Esophagus muscularis mucosa (tissue), 4 donors: ENCODE measurements at regions of chr3 and their contacts with region 1.

Region 1: GRCh38 chr3:19866751-19867347 is 67.2 kb downstream of the EFHB start:
- DNase-seq: no peak
- H3K4me3 ChIP-seq: no peak overlapping the region
- H3K27ac ChIP-seq: no peak overlapping the region
- H3K4me1 ChIP-seq: no peaks in the 10 kb centered on the region
- H3K27me3 ChIP-seq: no peaks in the 10 kb centered on the region
- CTCF ChIP-seq: peak; percentile 71 to 80 (median 74)
- EP300 ChIP-seq: no peak
- POLR2A ChIP-seq: no peak

Region 2: DNA sequence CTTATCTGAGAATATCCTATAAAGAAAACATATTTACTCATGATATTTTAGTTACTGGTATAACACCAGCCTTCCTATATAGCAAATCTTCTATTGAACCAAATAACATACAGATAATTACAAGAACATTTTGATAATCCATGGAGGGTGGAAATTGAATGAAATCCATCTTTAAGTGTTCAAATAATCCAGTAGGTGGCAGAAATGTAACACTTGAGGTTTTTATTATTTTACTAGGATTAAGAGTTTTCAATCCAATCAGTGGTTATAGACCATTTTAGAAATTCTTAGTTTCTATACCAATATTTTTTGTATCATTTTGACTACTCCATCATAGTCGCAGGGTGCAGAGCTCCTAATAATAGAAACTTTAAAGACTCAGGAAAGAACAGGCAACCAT is 820.4 kb before region 1 on chr3:
- intact Hi-C with region 1: loop called (anchors 5 kb)
- DNase-seq: no peak
- H3K4me3 ChIP-seq: no peak overlapping the region
- H3K27ac ChIP-seq: no peak overlapping the region
- H3K4me1 ChIP-seq: no peaks in the 10 kb centered on the region
- H3K27me3 ChIP-seq: no peaks in the 10 kb centered on the region
- CTCF ChIP-seq: peak in 1 of 3 experiments; percentile 12
- EP300 ChIP-seq: no peak
- POLR2A ChIP-seq: no peak

Region 3: DNA sequence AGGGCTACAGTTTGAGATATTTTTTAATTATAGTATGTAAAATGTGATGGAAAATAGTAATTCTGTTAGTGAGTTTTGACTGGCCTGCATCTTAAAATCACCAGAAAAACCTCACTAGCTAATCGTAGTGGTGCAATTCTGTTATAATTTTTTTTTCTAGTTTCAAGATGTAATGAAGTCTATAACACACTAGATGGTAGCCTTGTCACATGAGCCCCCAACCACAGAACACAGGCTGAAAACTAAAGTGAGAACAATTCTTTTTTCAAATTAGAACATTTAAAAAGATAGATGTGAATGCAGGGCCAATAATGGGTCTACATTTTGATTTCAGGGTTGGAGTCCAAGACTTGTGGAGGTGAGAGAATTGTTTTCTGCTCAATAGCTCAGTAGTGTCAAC is 801.8 kb before region 1 on chr3:
- intact Hi-C with region 1: loop called (anchors 5 kb)
- DNase-seq: no peak
- H3K4me3 ChIP-seq: no peak overlapping the region
- H3K27ac ChIP-seq: no peak overlapping the region
- H3K4me1 ChIP-seq: no peaks in the 10 kb centered on the region
- H3K27me3 ChIP-seq: no peaks in the 10 kb centered on the region
- CTCF ChIP-seq: peak in 2 of 3 experiments; percentile 23 to 29
- EP300 ChIP-seq: no peak
- POLR2A ChIP-seq: no peak

Region 4: GRCh38 chr3:19348929-19349564 is 517.8 kb before region 1 on chr3:
- intact Hi-C with region 1: loop called (anchors 5 kb)
- DNase-seq: no peak
- H3K4me3 ChIP-seq: no peak overlapping the region
- H3K27ac ChIP-seq: no peak overlapping the region
- H3K4me1 ChIP-seq: peaks cover 0 to 7% (median 0%) of the 10 kb centered on the region in 4 donors
- H3K27me3 ChIP-seq: no peaks in the 10 kb centered on the region
- CTCF ChIP-seq: peak; percentile 46 to 68 (median 47)
- EP300 ChIP-seq: no peak
- POLR2A ChIP-seq: no peak

Region 5: DNA sequence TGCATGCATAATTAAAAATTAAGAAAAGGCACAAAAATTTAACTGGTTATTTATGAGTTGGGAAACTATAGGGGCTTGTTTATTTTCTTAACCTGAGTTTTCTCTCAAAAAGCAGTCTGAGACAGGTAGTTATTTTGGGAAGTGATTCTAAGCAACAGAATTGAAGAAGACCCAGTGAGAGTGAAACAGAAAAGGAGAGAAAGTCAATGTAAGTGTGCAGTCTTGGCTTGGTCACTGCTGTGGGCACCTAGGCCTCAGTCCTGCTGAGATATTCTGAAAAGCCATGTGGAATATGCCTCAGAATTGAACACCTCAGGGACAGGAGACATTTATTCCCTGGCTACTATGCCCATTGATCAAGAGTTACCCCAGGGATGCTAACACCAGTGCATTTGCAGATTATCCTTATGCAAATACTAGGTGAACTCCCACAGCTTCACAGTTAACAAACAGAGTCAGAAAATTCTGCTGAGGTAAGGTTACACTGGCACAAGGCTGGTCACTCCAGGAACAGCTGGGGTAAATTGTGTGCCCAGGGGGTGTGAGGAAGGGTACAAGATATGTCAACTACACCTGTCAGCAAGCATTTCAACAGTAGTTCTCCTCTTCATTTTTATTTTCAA is 155.6 kb before region 1 on chr3:
- intact Hi-C with region 1: no loop called
- DNase-seq: no peak
- H3K4me3 ChIP-seq: no peak overlapping the region
- H3K27ac ChIP-seq: no peak overlapping the region
- H3K4me1 ChIP-seq: no peaks in the 10 kb centered on the region
- H3K27me3 ChIP-seq: no peaks in the 10 kb centered on the region
- CTCF ChIP-seq: no peak
- EP300 ChIP-seq: no peak
- POLR2A ChIP-seq: no peak

Region 6: DNA sequence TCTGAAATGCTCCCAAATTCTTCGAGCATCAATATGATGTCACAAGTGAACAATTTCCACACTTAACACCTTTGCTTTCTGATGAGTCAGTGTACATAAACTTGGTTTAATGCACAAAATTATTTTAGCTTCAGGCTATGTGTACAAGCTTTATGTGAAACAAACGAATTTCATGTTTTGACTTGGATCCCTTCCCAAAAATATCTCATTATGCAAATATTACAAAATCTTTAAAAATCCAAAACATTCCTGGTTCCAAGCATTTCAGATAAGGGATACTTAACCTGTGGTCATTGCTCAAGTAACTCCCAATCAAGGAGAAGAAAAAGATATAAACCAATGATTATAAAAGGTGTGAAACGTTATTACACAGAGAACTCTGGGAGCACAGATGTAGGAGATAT is 105.2 kb after region 1 on chr3:
- intact Hi-C with region 1: no loop called
- DNase-seq: no peak
- H3K4me3 ChIP-seq: no peak overlapping the region
- H3K27ac ChIP-seq: no peak overlapping the region
- H3K4me1 ChIP-seq: peaks cover 4 to 22% (median 17%) of the 10 kb centered on the region in 4 donors
- H3K27me3 ChIP-seq: no peaks in the 10 kb centered on the region
- CTCF ChIP-seq: no peak
- EP300 ChIP-seq: no peak
- POLR2A ChIP-seq: no peak